ENCODE measurements at regions of chr5 and their contacts with region 1.

Region 1: DNA sequence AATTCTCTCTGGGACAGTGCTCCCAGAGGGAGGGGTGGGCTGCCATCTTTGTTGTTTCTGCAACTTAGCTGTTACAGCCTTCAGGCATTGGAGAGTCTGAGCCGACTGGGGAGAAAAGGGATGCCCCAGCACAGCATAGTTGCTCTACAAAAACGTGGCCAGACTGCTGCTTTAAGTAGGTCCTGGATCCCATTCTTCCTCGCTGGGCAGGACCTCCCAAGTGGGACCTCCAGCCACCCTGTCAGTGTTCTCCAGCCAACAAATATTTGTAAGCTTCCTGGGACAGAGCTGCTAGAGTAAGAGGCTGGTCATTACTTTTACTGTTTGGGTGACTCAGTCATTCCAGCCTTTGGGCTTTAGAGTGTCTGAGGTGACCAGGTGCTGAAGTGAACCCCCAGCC is 292.7 kb upstream of the NREP start:
- DNase-seq: no peak

Region 2: DNA sequence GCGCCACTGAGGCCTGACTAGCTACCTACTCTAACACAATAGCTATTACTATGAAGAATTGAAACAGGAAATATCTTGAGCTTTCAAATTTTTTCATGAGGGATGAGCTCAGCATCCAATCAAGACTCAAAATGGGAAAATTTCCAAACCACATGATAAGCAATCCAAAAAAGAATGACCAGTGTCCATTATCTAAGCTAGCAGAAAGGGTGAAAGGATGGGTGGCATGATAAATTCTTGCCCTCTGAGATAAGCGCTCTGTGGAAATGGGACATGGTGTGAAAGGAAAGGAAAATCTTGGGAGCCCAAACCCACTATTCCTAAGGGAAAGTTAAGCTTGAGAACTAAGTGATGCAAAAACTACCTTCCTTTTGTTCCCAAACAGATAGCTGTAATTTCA is 122.5 kb before region 1 on chr5:
- intact Hi-C with region 1: loop called in 1 of 2 experiments (anchors 1 kb)
- DNase-seq: no peak

Region 3: DNA sequence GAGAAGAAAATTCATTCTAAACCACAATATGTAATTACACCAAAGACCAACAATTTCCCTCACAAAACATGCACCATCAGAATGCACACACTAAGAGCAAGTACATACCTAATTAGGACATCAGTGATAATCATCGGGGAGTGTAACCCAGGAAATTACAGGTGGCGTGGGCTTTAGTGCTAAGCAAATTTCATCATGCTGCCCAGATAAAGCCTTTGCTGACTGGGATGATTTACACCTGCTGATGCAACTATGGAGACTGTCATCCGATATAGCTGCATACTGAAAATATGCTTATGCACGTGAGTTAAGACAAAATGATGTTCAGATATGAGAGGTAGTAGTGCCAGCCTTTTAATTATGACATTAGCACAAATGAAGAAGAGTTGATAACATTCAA is 1050.1 kb after region 1 on chr5:
- intact Hi-C with region 1: loop called in 1 of 2 experiments (anchors 5 kb)
- DNase-seq: no peak